ENCODE measurements at regions of chr9 and their contacts with region 1.

Region 1: DNA sequence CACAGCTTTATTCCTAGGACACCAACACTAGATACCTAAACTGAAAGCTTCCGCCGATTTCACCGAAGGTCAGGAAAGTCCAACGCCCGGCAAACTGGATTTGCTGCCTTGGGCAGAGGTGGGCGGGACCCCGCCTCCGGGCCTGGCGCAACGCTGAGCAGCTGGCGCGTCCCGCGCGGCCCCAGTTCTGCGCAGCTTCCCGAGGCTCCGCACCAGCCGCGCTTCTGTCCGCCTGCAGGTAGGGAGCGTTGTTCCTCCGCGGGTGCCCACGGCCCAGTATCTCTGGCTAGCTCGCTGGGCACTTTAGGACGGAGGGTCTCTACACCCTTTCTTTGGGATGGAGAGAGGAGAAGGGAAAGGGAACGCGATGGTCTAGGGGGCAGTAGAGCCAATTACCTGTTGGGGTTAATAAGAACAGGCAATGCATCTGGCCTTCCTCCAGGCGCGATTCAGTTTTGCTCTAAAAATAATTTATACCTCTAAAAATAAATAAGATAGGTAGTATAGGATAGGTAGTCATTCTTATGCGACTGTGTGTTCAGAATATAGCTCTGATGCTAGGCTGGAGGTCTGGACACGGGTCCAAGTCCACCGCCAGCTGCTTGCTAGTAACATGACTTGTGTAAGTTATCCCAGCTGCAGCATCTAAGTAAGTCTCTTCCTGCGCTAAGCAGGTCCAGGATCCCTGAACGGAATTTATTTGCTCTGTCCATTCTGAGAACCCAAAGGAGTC is at the start of gene CD274:
- DNase-seq: peak; percentile 56 to 94
- H3K4me3 ChIP-seq: peak within 1 kb of the TSS; percentile 60 to 72
- H3K27ac ChIP-seq: peak within 1 kb of the TSS; percentile 79 to 80
- H3K4me1 ChIP-seq: peaks cover 3 to 30% of the 10 kb centered on the region in 2 donors
- H3K27me3 ChIP-seq: no peaks in the 10 kb centered on the region
- CTCF ChIP-seq: peak; percentile 67 to 85 (median 80)
- total RNA-seq, gene CD274: 23.8 TPM

Region 2: GRCh38 chr9:5582835-5583195 is 132.3 kb after region 1 on chr9:
- intact Hi-C with region 1: loop called (anchors 2 kb)
- DNase-seq: no peak
- H3K4me3 ChIP-seq: no peak overlapping the region
- H3K27ac ChIP-seq: peak overlapping the region; percentile 66 to 67
- H3K4me1 ChIP-seq: peaks cover 0 to 9% of the 10 kb centered on the region in 2 donors
- H3K27me3 ChIP-seq: no peaks in the 10 kb centered on the region
- CTCF ChIP-seq: no peak